Astrocyte of the cerebellum (primary cell): ENCODE measurements at regions of chr22 and their contacts with region 1.

Region 1: GRCh38 chr22:33426451-33426850 is 368.3 kb upstream of the SYN3 start:
- DNase-seq: peak; percentile 43
- H3K4me3 ChIP-seq: no peak overlapping the region
- CTCF ChIP-seq: no peak

Region 2: GRCh38 chr22:32430352-32430751 is 996.1 kb before region 1 on chr22:
- in situ Hi-C with region 1: no loop called
- DNase-seq: no peak
- H3K4me3 ChIP-seq: no peak overlapping the region
- CTCF ChIP-seq: no peak

Region 3: DNA sequence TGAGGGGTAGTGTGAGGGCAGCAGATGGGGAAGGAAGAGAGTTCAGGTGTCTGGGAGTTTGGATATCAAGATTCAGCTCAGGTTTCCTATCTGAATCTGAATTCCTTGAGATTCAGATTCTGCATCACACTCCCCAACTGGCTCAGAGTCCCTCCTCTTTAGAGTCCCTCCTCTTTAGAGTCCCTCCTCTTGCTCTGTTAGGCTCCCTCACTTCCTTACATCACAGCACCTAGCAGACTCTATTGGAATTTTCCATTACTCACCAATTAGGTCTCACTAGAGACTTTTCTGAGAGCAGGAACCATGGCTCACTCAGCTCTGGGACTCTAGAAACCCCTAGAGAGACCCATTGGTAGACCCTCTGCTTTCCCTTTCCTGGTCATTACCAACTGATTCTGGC is 64.9 kb before region 1 on chr22:
- in situ Hi-C with region 1: no loop called
- DNase-seq: no peak
- H3K4me3 ChIP-seq: no peak overlapping the region
- CTCF ChIP-seq: no peak

Region 4: DNA sequence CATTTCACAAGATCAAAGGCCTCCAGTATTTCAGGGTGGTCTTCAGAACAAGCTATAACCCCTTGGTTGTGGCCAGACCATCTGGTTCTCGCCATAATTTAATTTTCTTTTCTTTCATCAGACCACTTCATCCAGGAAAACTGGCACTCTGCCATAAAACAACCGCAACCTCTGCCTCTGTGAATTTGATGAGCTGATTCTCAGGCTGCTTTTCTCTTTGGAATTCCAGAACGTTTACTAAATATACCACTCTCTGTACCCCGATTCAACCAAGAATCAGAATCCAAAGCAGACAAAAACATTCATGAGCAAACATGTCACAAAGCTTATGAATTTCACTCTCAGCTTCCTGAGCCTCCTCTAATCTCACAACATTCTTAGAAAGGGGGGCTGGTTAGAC is 36.5 kb before region 1 on chr22:
- in situ Hi-C with region 1: loop called (anchors 5 kb)
- DNase-seq: peak; percentile 67
- H3K4me3 ChIP-seq: no peak overlapping the region
- CTCF ChIP-seq: no peak

Region 5: DNA sequence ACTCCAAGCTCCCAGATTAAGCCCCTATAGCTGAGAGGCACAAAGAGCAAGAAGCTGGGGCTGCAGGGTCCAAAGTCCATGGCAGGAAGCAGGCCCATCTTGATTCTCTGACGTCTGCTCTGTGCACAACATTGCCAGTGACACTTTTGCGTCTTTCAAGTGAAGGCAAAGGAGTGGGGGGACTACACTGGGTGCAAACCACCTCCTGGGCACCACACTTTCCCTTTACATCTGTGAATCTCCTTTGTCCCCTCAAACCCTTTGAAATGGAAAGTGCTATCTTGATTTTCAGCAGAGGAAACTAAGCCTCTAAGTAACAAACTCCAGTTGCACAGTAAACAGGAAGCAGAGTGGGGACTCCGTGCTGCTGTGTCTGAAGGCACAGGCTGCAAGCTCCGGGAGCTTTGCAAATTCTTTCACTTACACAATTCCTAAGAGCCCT is 65.8 kb after region 1 on chr22:
- in situ Hi-C with region 1: no loop called
- DNase-seq: no peak
- H3K4me3 ChIP-seq: no peak overlapping the region
- CTCF ChIP-seq: no peak